ENCODE measurements at regions of chr9 and their contacts with region 1.

Region 1: DNA sequence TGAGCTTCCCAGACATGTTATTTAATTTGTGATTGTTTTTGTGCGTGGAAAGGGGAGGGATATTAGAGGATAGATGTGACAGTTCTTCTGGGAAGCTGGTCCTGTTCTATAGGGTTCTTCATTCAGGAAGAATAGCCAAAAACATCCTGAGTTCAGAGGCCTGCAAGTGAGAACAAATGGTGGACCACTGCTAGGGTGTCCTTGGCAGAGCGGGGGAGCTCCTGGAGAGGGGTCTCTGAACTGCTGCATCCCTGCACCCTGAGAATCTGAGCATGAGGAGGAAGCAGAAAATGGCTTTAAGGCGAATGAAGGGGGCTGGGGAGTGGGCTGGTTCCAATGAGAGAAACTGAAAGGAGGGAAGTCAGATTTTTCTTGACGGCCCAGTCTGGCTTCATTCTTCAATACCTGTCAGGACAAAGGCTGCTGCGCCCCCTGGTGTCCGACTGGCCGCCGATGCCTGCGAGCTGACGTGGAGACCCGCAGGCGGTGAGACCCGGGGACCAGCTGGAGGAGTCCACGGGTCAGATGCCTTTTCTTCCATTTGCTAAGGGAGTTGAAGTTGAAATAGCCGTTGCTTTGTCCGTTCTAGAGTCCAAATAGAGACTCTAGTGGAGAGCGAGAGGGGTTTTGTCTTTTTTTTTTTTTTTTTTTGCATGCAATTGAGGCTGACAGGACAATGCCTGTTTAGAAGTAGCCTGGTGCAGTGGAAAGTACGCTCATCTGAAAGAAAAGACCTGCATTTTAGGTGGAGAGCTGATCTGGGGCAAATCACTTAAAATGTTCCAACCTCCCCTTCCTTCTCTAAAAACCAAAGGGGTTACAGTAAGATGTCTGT is 39.5 kb upstream of the NFIB start:
- DNase-seq: peak in 1 of 2 experiments; percentile 99
- H3K4me3 ChIP-seq: 0 out of 8 replicates have a peak overlapping the region, but pooled peaks of 1 of the 4 experiments have one; percentile 16
- H3K27ac ChIP-seq: no peak overlapping the region
- H3K4me1 ChIP-seq: peaks cover 7 to 17% (median 14%) of the 10 kb centered on the region in 4 experiments
- H3K27me3 ChIP-seq: peaks cover 28 to 48% (median 43%) of the 10 kb centered on the region in 4 experiments
- CTCF ChIP-seq: peak; percentile 84 to 95 (median 93)
- EP300 ChIP-seq: no peak
- POLR2A ChIP-seq: no peak
- RAD21 ChIP-seq: peak; percentile 92 to 95

Region 2: GRCh38 chr9:13427587-13427986 is 925.9 kb before region 1 on chr9:
- CTCF ChIA-PET with region 1: interaction called, 31 read pairs
- POLR2A ChIA-PET with region 1: no interaction called
- DNase-seq: no peak
- H3K4me3 ChIP-seq: no peak overlapping the region; a peak in 1 of 8 replicates
- H3K27ac ChIP-seq: no peak overlapping the region
- H3K4me1 ChIP-seq: peaks cover 3 to 23% (median 12%) of the 10 kb centered on the region in 4 experiments
- H3K27me3 ChIP-seq: no peaks in the 10 kb centered on the region
- CTCF ChIP-seq: peak in 2 of 3 experiments; percentile 24 to 46; a peak in 2 of 4 replicates
- EP300 ChIP-seq: no peak
- POLR2A ChIP-seq: no peak
- RAD21 ChIP-seq: peak; percentile 79 to 86

Region 3: DNA sequence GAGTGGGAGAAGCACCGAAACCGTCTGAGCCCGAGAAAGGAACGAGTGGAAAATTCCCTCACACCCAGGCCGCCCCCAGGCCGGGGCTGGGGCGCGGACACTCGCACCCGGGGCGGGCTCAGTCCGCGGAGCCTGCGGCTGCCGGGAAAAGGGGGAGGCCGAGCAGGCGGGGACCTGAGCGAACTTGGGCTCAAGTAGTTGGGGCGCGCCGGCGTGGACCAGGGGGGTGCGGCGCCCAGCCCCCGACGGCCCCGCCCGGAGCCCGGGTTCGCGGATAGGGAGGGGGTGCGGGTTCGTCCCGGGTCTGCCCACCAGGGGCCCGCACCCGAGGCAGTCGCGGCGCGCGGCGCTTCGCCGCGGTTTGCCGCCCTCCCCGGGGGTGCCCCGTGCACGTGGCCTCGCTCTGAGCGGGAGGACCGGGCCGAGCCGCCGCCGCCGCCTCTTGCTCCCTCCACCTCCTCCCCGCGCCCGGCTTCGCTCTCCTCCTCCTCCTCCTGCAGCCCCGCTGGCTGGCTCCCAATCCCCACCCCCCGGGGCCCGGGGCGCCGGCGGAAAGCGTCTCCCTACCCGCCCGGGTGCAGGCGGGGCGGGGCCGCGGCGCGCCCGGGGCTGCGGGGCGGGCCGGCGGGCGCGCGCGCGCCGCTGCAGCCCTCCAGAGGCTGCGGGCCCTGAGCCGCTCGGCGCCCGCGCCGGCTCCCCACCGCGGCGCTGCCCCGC is 38.4 kb before region 1 on chr9:
- CTCF ChIA-PET with region 1: interaction called, 18 read pairs
- POLR2A ChIA-PET with region 1: interaction called, 26 read pairs
- DNase-seq: peak in 1 of 2 experiments; percentile 84
- H3K4me3 ChIP-seq: peak overlapping the region; percentile 62 to 85 (median 72)
- H3K27ac ChIP-seq: peak overlapping the region; percentile 81; the same call in 1 of the 2 replicates
- H3K4me1 ChIP-seq: peaks cover 9 to 23% (median 14%) of the 10 kb centered on the region in 4 experiments; a peak in 6 of 7 replicates
- H3K27me3 ChIP-seq: peaks cover 0 to 8% (median 0%) of the 10 kb centered on the region in 4 experiments; a peak in 3 of 7 replicates
- CTCF ChIP-seq: no peak
- EP300 ChIP-seq: no peak
- POLR2A ChIP-seq: peak in 1 of 2 experiments; percentile 51; a peak in 2 of 3 replicates
- RAD21 ChIP-seq: no peak

Region 4: GRCh38 chr9:14369011-14369410 is 15.6 kb after region 1 on chr9:
- CTCF ChIA-PET with region 1: interaction called, 17 read pairs
- POLR2A ChIA-PET with region 1: no interaction called
- DNase-seq: no peak
- H3K4me3 ChIP-seq: no peak overlapping the region
- H3K27ac ChIP-seq: no peak overlapping the region
- H3K4me1 ChIP-seq: peaks cover 0 to 7% (median 4%) of the 10 kb centered on the region in 4 experiments; a peak in 2 of 7 replicates
- H3K27me3 ChIP-seq: no peaks in the 10 kb centered on the region
- CTCF ChIP-seq: no peak
- EP300 ChIP-seq: no peak
- POLR2A ChIP-seq: no peak
- RAD21 ChIP-seq: no peak

Region 5: DNA sequence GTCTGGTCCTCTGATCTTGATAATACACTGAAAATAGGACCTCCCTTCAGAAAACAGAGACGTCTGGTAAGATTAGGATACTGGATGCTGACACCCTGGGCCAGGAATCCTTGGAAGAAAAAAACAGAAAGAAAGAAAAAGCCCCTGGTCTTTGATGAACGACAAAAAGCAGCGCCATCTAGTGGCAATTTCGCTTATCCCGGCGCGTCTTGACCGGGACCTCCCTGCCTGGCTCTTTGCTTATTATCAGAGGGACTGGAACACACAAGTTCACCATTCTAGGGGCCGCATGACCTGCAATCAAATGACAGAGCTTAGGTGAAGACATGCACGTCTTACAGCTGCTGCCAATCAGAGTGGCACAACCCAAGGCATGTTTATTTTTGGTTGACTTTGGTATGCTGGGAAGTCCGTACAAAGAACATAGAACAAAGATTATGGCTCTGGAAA is 75.4 kb after region 1 on chr9:
- CTCF ChIA-PET with region 1: interaction called, 14 read pairs
- POLR2A ChIA-PET with region 1: no interaction called
- DNase-seq: peak; percentile 41 to 92
- H3K4me3 ChIP-seq: no peak overlapping the region
- H3K27ac ChIP-seq: no peak overlapping the region
- H3K4me1 ChIP-seq: peaks cover 2 to 14% (median 8%) of the 10 kb centered on the region in 4 experiments; a peak in 5 of 7 replicates
- H3K27me3 ChIP-seq: no peaks in the 10 kb centered on the region
- CTCF ChIP-seq: peak; percentile 67 to 82 (median 77)
- EP300 ChIP-seq: peak in 1 of 2 experiments; percentile 27; a peak in 1 of 3 replicates
- POLR2A ChIP-seq: no peak
- RAD21 ChIP-seq: peak; percentile 77 to 83